Activated T-helper 1 cell treated with anti-CD3 and anti-CD28 coated beads, Interleukin-12 subunit alpha, Interleukin-12 subunit beta, Interleukin-2, Interleukin-4 antibody, amounts not matched to agents 30 ng/mL and 10 ng/mL and 1 ng/mL, durations not matched to agents 14 hours and 24 hours and 36 hours (primary cell): ENCODE measurements at regions of chr2 and their contacts with region 1.

Region 1: DNA sequence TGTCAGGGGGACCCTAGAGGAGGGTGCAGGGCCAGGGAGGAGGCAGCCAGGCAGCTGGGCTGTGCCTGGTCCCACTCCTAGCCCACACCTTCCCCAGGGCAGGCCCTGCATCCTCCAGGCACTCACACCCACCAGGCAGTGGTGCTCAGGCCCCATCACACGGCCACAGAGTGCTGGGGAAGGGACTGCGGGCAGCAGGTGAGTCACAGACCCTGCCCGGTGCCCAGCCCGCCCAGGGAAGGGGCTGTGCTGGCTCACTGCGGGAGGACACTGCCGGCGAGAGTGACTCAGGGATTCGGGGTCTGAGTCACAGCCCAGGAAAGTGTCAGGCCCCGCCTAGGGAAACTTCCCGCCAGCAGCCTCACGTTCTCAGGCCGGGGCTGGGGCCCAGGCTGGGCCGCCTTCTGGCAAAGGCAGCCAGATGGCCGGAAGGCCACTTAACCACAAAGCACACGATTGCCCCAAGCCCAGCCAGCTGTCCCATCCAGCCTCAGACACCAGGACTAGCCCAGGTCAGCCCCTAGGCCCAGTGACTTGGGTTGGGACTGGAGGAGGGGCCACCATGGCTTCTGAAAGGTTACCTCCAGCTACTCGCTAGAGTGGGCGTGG is 42.2 kb downstream of the BIN1 start:
- DNase-seq: peak; percentile 60
- H3K4me3 Mint-ChIP-seq: no peak overlapping the region
- H3K27ac Mint-ChIP-seq: peak overlapping the region; percentile 65
- H3K4me1 Mint-ChIP-seq: peaks cover 14% of the 10 kb centered on the region
- H3K27me3 Mint-ChIP-seq: no peaks in the 10 kb centered on the region

Region 2: GRCh38 chr2:127106951-127107621 is 42.3 kb after region 1 on chr2 and contains the start of gene BIN1:
- intact Hi-C with region 1: loop called (anchors 1 kb)
- DNase-seq: peak; percentile 77
- H3K4me3 Mint-ChIP-seq: peak within 1 kb of the TSS; percentile 83
- H3K27ac Mint-ChIP-seq: no peak within 1 kb of the TSS
- H3K4me1 Mint-ChIP-seq: peaks cover 6% of the 10 kb centered on the region
- H3K27me3 Mint-ChIP-seq: peaks cover 40% of the 10 kb centered on the region
- total RNA-seq, gene BIN1: 38.4 and 41.9 TPM in 2 replicates